ENCODE measurements at regions of chr13 and their contacts with region 1.

Region 1: DNA sequence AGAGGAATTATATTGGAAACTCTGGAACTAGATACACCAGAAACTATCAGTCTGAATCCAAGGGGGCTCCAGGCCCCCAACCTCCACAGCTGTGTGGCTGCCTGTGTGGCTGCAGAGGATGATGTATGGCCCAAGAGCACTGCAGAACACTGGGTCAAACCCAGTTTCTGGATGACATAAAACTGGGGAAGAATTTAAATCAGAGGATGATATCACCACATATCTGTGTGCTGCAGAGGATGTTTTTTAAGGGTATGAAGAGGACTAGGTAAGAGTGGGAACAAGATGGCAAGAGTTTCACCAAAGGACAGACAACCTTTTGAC is 226.4 kb downstream of the SUCLA2 start:
- DNase-seq: no peak
- CTCF ChIP-seq: no peak

Region 2: DNA sequence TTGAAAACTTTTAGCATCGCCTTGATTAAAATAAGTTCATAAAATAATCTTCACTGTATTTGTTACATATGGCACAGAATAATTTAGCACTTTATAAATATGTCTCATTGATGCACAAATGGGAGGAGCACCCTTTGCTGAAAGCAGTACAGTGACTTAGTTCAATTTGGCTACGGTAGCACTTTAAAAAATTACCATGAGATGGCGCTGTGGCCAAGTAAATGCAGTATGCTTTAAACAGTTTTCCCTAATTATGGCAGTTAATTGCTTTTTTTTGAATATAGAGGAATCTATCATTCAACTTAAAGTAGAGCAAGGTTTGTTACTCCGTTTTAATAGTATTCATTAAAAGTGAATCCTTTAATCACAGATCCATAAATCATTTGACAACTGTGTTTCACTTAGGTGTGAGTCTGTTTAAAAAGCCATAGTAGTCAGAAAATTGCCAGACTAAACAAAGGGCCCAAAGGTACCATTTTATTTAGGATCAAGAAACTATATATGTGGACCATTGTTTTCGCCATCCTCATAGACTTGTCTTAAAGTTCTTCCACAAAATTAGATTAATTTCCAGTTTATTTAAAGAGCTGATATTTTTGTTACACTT is 942.9 kb before region 1 on chr13:
- in situ Hi-C with region 1: loop called (anchors 10 kb)
- DNase-seq: peak; percentile 28
- CTCF ChIP-seq: peak; percentile 72

Region 3: GRCh38 chr13:47696674-47697073 is 78.0 kb before region 1 on chr13:
- in situ Hi-C with region 1: no loop called
- DNase-seq: no peak
- CTCF ChIP-seq: no peak

Measured in GM13976 (cell line).